ENCODE measurements at regions of chr1 and their contacts with region 1.

Region 1: GRCh38 chr1:172745014-172745413 is 86.1 kb downstream of the FASLG start:
- DNase-seq: peak; percentile 61 to 78 (median 73)
- H3K4me3 ChIP-seq: no peak overlapping the region
- H3K4me3 Mint-ChIP-seq: peak overlapping the region in 1 of 2 donors; percentile 60
- H3K27ac ChIP-seq: no peak overlapping the region
- H3K27ac Mint-ChIP-seq: peak overlapping the region in 5 of 7 donors; percentile 62 to 86 (median 77)
- H3K4me1 ChIP-seq: peaks cover 22 to 29% of the 10 kb centered on the region in 2 donors
- H3K4me1 Mint-ChIP-seq: peaks cover 30% of the 10 kb centered on the region
- H3K27me3 ChIP-seq: no peaks in the 10 kb centered on the region
- H3K27me3 Mint-ChIP-seq: peaks cover 0 to 6% (median 2%) of the 10 kb centered on the region in 3 donors
- CTCF ChIP-seq: peak; percentile 85

Region 2: DNA sequence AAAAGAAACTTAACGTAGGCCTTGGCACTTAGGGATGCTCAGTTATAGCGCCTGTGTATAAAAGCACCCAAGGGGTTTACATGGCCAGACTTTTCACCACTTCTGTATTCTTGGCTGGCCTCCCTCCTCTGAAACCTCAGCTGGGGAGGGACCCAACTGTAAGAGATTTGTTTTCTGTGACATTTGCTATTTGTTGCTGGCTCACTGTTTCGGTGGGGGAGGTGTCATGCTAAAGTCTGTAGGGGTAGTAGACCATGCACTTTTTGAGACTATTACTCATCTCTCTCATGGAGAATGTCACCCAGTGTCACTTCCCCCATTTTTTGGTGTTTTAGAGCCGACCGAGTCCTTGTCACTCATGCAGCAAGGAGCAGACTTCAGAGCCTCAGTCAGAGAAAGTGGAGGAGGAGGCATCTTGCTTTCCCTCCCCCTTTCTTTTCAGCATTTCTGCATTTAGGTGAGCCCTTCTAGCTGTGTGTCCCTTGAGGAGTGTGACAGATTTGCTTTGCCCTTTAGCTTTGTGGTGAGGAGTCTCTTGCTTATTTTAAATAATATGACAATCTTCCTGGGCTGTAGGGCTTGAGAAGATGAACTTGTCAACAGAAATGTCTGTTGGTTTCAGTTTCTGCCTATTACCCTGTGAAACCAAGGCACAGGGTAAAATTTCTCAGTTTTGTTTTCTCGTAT is 74.0 kb after region 1 on chr1:
- intact Hi-C with region 1: loop called (anchors 5 to 10 kb)
- DNase-seq: peak; percentile 77 to 82 (median 82)
- H3K4me3 ChIP-seq: no peak overlapping the region
- H3K4me3 Mint-ChIP-seq: no peak overlapping the region
- H3K27ac ChIP-seq: peak overlapping the region in 1 of 2 donors; percentile 73
- H3K27ac Mint-ChIP-seq: peak overlapping the region; percentile 43 to 91 (median 86)
- H3K4me1 ChIP-seq: peaks cover 15 to 23% of the 10 kb centered on the region in 2 donors
- H3K4me1 Mint-ChIP-seq: peaks cover 32% of the 10 kb centered on the region
- H3K27me3 ChIP-seq: no peaks in the 10 kb centered on the region
- H3K27me3 Mint-ChIP-seq: peaks cover 0 to 2% (median 2%) of the 10 kb centered on the region in 3 donors
- CTCF ChIP-seq: no peak

Region 3: DNA sequence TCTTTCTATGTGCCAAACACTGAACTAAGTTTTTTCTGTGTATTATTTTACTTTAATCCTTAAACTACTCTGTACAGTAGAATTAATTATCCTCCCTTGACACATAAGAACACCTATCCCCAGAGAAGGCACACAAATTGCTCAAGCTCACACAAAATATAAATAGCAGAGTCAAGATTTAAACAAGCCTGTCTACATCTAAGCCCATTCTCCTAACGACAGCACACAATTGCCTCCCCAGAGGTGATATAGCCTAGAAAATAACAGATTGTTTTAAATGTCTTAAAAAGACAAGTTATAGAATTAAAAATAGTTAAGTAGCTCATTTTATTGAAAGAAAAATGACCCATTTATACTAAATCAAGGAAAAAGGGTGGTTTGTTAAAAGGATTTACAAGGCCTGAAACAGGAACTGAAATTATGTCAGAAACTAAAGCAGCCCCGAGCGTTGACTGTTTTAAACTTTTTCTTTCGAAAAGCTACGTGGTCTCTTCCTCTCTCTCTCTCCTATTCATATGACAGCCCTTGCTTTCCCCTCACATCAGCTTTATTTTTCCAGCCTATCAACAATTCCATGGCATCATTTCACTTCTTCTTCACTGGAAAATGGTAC is 275.2 kb after region 1 on chr1:
- intact Hi-C with region 1: loop called (anchors 10 kb)
- DNase-seq: peak in 2 of 3 donors; percentile 43 to 59
- H3K4me3 ChIP-seq: peak overlapping the region in 2 of 3 experiments; percentile 35 to 59
- H3K4me3 Mint-ChIP-seq: peak overlapping the region; percentile 57 to 85
- H3K27ac ChIP-seq: peak overlapping the region; percentile 63 to 73
- H3K27ac Mint-ChIP-seq: peak overlapping the region; percentile 79 to 93 (median 88)
- H3K4me1 ChIP-seq: peaks cover 49 to 56% of the 10 kb centered on the region in 2 donors
- H3K4me1 Mint-ChIP-seq: peaks cover 46% of the 10 kb centered on the region
- H3K27me3 ChIP-seq: no peaks in the 10 kb centered on the region
- H3K27me3 Mint-ChIP-seq: no peaks in the 10 kb centered on the region
- CTCF ChIP-seq: no peak

Region 4: GRCh38 chr1:173122958-173123852 is 378.2 kb after region 1 on chr1:
- intact Hi-C with region 1: loop called (anchors 5 to 10 kb)
- DNase-seq: peak; percentile 92 to 96 (median 95)
- H3K4me3 ChIP-seq: peak overlapping the region; percentile 27 to 97 (median 73)
- H3K4me3 Mint-ChIP-seq: peak overlapping the region; percentile 76 to 86
- H3K27ac ChIP-seq: peak overlapping the region; percentile 59 to 94
- H3K27ac Mint-ChIP-seq: peak overlapping the region; percentile 94 to 99 (median 97)
- H3K4me1 ChIP-seq: peaks cover 17 to 20% of the 10 kb centered on the region in 2 donors
- H3K4me1 Mint-ChIP-seq: peaks cover 27% of the 10 kb centered on the region
- H3K27me3 ChIP-seq: no peaks in the 10 kb centered on the region
- H3K27me3 Mint-ChIP-seq: peaks cover 0 to 5% (median 1%) of the 10 kb centered on the region in 3 donors
- CTCF ChIP-seq: no peak

Region 5: GRCh38 chr1:173202430-173203145 is 457.6 kb after region 1 on chr1:
- intact Hi-C with region 1: loop called (anchors 5 to 10 kb)
- DNase-seq: peak in 2 of 3 donors; percentile 37 to 55
- H3K4me3 ChIP-seq: no peak overlapping the region
- H3K4me3 Mint-ChIP-seq: no peak overlapping the region
- H3K27ac ChIP-seq: no peak overlapping the region
- H3K27ac Mint-ChIP-seq: no peak overlapping the region
- H3K4me1 ChIP-seq: peaks cover 23 to 26% of the 10 kb centered on the region in 2 donors
- H3K4me1 Mint-ChIP-seq: peaks cover 31% of the 10 kb centered on the region
- H3K27me3 ChIP-seq: no peaks in the 10 kb centered on the region
- H3K27me3 Mint-ChIP-seq: peaks cover 0 to 5% (median 0%) of the 10 kb centered on the region in 3 donors
- CTCF ChIP-seq: peak; percentile 69

Region 6: DNA sequence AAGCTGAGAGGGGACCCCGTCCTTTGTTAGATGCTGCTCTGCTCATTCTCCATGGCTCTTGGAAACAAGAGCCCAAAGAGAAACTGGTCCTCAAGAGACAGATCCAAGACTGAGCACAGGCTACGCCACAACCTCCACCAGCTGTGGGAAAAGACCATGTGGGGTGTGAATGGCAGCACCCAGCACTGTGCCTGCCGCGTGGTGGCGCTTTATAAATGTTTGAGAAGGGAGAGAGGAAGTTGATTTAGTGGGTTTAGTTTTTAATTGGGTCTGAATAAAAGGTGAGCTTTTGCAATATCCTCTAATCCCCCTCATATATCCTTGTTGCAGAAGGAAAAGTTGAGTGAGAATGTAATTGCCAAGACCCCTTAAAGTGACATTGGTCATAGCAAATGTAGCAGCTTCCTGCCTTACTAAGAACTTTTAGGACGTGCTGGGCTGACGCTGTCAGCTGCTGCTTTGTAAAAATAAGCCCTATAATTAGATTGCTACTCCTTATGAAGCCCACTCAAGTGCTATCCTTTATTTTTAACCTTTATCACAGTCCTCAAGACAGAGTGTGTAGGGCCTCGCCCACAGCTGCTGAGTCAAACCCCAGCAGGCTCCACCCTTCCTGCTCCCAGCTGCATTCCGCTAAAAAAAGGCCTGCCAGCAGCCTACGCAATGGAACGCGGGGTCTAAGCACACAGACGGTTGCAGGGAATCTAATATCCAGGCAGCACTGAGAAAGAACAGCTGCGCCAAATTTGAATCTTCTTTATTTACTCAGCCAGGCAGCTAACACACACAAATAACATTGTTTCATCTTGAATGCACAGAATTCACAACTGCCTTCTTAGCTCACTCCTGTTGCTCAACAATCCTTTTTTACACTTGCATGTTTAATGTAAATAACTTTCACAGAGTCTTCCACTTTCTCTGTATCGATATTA is 684.7 kb after region 1 on chr1:
- intact Hi-C with region 1: loop called (anchors 5 to 10 kb)
- DNase-seq: peak; percentile 55 to 64 (median 56)
- H3K4me3 ChIP-seq: peak overlapping the region; percentile 23 to 73 (median 52)
- H3K4me3 Mint-ChIP-seq: peak overlapping the region; percentile 62 to 89
- H3K27ac ChIP-seq: peak overlapping the region; percentile 64 to 82
- H3K27ac Mint-ChIP-seq: peak overlapping the region; percentile 79 to 94 (median 88)
- H3K4me1 ChIP-seq: peaks cover 32 to 35% of the 10 kb centered on the region in 2 donors
- H3K4me1 Mint-ChIP-seq: peaks cover 38% of the 10 kb centered on the region
- H3K27me3 ChIP-seq: no peaks in the 10 kb centered on the region
- H3K27me3 Mint-ChIP-seq: peaks cover 0 to 2% (median 0%) of the 10 kb centered on the region in 3 donors
- CTCF ChIP-seq: peak; percentile 68

Measured in CD14-positive monocyte (primary cell).